Activated CD8-positive, alpha-beta T cell treated with anti-CD3 and anti-CD28 coated beads for 36 hours (primary cell): ENCODE measurements at regions of chr4 and their contacts with region 1.

Region 1: GRCh38 chr4:75525910-75526309 is 11.6 kb downstream of the THAP6 start:
- DNase-seq: no peak
- ATAC-seq: no peak
- H3K4me3 Mint-ChIP-seq: no peak overlapping the region
- H3K27ac Mint-ChIP-seq: no peak overlapping the region
- H3K4me1 Mint-ChIP-seq: peaks cover 7% of the 10 kb centered on the region
- H3K27me3 Mint-ChIP-seq: no peaks in the 10 kb centered on the region
- CTCF ChIP-seq: no peak

Region 2: DNA sequence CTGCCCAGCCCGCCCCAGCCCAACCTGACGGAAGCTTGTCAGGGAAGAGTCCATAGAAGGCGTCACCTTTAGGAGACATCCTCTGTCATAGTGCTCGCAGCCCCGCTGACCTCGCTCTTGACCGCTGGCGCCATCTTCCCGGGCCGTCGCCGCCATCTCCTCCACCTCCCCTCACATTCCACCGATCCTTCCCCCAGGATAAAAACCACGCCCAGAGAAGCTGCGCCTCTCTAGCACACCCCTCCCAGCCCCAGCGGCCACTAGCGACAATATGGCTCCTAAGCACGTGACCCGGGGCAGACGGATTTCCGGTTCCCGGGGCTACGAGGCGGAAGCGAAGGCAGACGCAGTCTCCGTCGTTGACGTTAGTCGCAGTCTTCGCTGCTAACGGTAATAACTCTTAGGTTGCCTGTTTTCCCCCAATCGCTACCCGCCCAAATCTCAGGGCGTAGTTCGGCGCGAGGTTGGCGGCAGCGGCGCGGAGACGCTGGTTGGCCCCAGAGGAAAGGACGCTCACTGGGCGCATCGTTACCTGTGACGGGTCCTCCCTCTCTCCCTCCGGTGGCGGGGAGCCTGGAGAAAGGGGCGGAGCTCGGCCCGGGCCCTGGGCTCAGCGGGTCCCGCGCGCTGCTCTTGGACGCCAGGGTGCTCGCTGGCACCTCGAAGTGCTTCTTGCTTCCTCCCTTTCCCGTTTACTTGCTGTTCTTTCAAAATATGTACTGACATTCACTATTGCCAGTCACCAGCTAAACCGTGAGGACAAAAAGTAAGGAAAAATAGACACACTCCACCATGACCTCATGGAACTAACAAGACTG is 11.6 kb before region 1 on chr4 and contains the starts of genes RCHY1 and THAP6:
- CTCF ChIA-PET with region 1: interaction called, 11 read pairs
- POLR2A ChIA-PET with region 1: no interaction called
- intact Hi-C with region 1: no loop called
- DNase-seq: peak; percentile 94
- ATAC-seq: peak; percentile 91
- H3K4me3 Mint-ChIP-seq: no peak within 1 kb of the TSS
- H3K27ac Mint-ChIP-seq: peak within 1 kb of the TSS; percentile 94
- H3K4me1 Mint-ChIP-seq: peaks cover 50% of the 10 kb centered on the region
- H3K27me3 Mint-ChIP-seq: no peaks in the 10 kb centered on the region
- CTCF ChIP-seq: no peak
- total RNA-seq, gene RCHY1: 33.1 to 33.3 TPM
- total RNA-seq, gene THAP6: 16.6 to 19.1 TPM